Cardiac septum (tissue), 1 donor: ENCODE measurements at regions of chr2 and their contacts with region 1.

Region 1: GRCh38 chr2:46296840-46297545 is at the start of gene EPAS1:
- DNase-seq: peak; percentile 98
- total RNA-seq, gene EPAS1: 139 TPM

Region 2: DNA sequence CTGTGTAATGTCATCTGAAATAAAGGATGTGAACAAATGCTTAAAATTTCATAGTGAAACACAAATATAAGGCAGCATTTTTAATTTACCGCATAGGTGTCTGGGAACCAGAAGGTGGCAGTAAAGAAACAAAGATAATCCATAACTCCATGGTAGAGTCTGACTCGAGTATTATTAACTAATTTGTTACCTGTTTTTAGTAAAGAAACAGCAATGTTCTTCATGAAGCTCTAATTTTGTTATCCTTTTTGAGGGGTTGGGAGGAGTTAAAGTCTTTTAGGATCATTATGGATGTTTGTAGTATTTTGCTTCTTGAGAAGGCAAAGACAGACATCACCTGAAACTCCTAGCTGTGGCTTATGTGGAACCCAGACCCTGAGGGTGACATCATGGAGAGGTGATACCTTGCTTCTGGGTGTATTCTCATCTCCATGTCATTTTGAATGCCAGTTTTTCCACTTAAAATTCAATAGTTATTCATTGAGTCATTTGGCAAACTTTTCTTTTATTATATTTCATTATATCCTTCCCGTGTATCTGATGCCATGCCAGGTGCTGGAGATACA is 286.0 kb before region 1 on chr2:
- intact Hi-C with region 1: loop called (anchors 5 kb)
- DNase-seq: no peak

Region 3: DNA sequence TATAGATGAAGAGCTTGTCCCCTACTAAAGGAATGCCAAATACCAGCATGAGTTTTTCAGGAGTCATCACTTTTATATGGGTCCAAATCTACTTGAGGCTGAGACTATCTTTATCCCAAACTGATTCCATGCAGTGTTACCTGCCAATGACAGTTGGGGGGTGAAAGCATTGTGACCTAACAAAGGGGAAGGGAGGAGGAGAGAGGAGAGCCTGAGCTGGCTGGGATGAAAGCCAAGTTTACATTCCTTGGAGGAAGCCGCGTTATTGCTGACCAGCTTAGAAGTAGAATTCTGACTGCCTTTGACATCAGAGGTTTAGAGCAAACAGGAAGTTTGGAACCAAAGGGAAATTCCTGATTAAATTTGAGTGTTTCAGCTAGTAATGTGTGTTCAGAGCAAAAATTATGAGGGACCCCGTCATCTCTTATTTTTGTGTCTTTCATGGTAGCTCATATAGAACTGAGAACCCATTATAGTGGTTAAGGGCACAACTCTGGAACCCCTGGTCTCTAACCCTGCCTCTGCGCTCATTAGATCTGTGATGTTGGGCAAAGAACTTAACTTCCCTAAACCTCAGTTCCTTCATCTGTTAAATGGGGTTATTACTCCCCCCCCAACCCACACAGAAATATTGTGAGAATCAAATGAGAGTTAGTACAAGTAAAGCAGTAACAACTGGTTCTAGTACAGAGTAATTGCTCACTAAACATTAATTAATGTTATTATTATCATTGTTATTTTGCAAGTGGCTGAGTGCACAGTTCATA is 199.1 kb before region 1 on chr2:
- intact Hi-C with region 1: loop called (anchors 10 kb)
- DNase-seq: peak; percentile 81

Region 4: DNA sequence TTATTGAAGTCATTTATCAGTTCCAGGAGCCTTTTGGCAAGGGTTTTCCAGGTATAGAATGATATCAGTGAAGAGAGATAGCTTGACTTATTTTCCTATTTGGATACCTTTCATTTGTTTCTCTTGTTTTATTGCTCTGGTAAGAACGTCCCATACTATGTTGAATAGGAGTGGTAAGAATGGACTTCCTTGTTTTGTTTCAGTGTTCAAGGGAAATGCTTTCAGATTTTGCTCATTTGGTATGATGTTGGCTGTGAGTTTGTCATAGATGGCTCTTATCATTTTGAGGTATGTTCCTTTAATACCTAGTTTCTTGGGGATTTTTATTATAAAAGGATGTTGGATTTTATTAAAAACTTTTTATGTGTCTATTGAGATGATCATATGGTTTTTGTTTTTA is 86.9 kb before region 1 on chr2:
- intact Hi-C with region 1: no loop called
- DNase-seq: no peak

Region 5: GRCh38 chr2:46335391-46336282 is 38.6 kb after region 1 on chr2:
- intact Hi-C with region 1: loop called (anchors 1 kb)
- DNase-seq: no peak

Region 6: DNA sequence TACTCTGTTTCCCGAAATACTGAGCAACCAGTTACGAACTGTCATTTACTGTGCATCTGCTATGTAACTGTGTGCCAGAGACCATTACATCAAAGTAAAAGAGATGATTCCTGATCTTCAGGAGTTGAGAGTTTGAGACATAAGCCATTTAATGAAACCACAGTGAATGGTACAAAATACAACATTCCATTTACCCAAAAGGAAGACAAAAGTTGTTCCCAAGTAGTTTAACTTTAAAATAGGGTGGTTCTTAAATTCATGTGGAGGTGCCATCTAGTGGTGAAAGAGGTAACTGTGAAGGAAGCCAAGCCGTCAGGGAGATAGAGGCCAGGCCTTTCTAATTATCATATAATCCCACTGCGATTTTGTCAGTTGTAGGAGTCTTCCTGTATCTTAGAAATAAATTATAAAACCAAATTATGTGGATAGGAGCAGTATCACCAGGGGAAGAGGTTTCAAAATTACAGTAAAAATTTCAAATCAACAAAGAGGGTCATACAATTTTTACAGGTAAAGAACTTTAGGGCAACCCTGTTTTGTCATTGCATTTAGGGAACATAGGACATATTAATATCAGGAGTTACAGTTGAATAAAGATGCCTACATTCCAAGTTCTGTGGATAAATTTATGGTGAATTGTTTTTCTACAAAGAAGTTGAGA is 67.9 kb after region 1 on chr2:
- intact Hi-C with region 1: loop called (anchors 2 kb)
- DNase-seq: no peak

Region 7: DNA sequence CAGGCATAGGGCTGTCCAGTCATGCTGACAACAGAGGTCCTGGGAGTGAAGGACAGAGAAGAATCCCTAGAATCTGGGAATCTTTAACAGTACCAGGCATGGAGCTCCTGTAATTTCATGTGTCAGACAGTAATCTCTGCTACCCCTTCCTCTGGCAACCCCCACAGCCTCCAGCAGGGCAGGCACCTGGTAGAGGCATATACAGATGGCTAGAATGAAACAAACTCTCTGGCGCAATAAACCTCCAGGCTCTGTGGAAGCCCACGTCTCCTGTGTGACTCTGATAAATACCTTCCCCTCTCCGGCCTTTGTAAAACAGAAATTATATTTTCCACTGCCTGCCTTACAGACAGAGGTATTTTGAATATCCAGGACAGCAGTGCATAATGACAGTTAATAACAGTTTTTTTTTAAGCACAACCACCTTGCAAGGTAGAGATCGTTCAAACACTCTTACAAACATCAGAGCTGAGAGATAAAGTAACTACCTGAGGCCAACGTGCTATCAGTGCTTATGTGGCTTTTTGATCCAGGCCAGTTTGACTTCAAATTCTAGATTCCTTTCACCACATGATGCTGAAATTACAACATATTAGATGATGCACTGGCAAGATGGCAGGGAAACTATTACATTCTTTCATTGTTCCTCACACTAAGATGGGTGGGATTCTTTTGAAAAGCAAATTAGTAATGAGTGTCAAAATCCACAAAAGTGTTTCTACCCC is 134.7 kb after region 1 on chr2:
- intact Hi-C with region 1: no loop called
- DNase-seq: no peak